GM10248 (cell line): ENCODE measurements at regions of chr2 and their contacts with region 1.

Region 1: DNA sequence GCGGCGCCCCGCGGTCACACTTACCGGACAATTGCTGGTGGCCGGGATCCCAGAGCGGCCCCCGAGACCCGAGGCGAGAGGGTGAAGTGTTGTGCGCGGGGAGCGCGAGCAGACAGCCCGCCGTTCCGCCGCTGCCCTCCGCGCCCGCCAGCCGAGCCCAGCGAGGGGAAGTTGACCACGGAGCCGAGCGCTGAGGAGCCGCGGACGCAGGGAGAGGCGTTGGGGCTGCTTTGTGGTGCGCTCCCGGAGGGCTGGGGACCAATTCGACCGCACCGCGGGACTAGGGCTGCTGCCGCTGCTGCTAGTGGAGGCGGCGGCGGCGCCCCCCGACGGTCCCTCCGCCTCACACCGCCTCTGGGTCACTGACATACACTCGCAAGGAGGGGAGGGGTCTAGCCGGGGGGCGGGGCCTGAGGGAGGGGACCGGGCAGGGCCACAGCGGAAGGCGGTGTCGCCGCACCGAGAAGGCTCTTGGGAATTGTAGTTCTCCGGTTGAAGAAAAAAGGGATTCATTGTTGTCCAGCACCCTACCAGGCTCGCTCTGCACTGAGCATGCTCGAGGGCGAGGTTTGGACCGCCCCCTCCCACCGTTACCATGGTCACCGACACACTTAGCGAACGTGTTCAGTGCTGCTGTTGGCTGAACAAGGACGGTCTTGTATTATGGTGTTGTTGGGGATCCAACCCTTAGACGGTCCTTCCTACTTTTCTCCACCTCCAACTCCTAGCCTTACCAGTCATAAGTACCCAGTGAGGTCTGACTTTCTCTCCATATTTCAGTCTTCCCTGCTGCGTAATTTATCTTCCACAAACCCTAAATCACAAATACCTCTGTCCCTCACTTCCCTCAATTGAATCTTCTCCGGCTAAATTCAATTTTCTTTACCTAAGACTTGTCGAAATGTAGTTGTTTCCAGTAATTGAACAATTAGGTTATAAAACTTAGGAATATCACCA is at the start of gene PELI1:
- DNase-seq: peak; percentile 94
- CTCF ChIP-seq: peak; percentile 49

Region 2: DNA sequence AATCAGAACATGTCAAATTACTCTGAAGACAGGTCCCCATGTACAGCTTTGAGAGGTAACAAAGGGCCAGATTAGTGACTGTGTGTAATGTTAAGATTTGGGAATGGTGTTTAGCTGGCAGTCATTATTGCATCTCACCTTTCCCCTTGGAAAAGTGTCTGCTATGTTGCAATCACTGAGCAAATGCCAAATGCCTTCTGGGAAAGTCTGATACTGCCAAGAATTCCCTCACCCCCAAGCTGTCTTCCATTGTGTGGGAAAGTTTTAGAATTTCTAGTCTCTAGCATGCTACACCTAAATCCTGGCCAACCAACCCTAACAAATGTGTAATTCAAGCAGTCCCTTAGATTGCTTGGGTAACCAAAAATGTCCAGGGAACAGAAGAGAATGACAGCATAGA is 13.5 kb after region 1 on chr2:
- CTCF ChIA-PET with region 1: interaction called, 11 read pairs
- POLR2A ChIA-PET with region 1: no interaction called
- DNase-seq: no peak
- CTCF ChIP-seq: no peak

Region 3: DNA sequence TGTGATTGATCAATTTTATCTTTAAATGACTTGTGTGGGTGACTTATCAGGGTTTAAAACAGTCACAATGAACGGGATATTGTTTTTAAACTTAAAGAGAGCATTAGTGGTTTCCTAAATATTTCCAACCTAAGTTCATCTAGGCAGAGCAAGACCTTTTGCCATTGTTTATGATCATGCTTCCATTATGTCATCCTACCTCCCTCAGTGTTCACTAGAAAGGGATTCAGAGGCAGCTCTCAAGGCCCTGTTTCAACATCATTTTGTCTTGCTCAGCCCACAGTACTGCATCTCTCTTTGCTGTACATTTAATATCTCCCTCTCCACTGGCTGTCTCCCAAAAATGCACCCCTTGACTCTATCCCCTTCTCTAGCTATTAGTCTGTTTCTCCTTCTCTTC is 21.4 kb after region 1 on chr2:
- CTCF ChIA-PET with region 1: interaction called, 10 read pairs
- POLR2A ChIA-PET with region 1: no interaction called
- DNase-seq: no peak
- CTCF ChIP-seq: no peak

Region 4: DNA sequence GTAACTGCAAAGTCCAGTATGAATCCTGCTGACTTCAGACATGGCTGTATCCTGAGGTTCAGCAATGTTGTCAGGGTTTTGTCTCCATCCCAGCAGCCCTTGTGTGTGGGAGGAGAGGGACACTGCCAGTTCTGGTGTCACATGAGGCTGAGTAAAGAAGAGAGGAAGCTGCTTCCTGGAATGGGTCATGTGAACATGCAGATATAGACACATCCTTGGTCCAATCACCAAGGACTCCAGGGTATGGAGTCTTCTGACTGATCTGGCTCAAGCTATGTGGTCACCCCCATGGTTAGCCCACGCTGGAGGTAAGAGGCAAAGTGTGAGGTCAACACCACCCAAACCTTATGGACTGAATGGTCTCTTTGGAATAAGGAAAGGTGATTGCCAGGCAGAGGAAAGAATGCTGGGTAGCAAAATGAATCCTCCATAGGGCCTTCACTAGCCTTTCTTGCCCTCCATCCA is 710.5 kb after region 1 on chr2:
- CTCF ChIA-PET with region 1: no interaction called
- POLR2A ChIA-PET with region 1: no interaction called
- DNase-seq: no peak
- CTCF ChIP-seq: no peak